ENCODE measurements at regions of chr22 and their contacts with region 1.

Region 1: GRCh38 chr22:22207845-22208564 is 36.6 kb upstream of the VPREB1 start:
- DNase-seq: peak; percentile 90
- ATAC-seq: peak; percentile 87
- H3K4me3 Mint-ChIP-seq: peak overlapping the region; percentile 51
- H3K27ac Mint-ChIP-seq: peak overlapping the region; percentile 85
- H3K4me1 Mint-ChIP-seq: peaks cover 42% of the 10 kb centered on the region
- H3K27me3 Mint-ChIP-seq: peaks cover 8% of the 10 kb centered on the region

Region 2: DNA sequence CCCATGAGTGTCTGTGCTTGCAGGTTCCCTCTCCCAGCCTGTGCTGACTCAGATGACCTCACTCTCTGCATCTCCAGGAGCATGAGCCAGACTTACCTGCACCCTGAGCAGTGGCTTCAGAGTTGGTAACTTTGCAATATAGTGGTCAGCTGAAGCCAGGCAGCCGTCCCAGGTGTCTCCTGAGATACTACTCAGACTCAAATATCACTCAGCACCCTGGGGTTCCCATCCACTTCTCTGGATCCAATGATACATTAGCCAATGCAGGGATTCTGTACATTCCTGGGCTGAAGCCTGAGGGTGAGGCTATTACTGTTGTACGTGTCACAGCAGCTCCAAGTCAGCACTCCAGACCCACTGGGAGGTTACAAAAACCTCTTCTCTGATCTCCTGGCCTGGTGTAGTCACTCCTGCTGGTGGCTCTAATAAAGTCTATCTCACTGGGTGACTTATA is 137.6 kb before region 1 on chr22:
- CTCF ChIA-PET with region 1: no interaction called
- POLR2A ChIA-PET with region 1: no interaction called
- DNase-seq: no peak
- ATAC-seq: no peak
- H3K4me3 Mint-ChIP-seq: no peak overlapping the region
- H3K27ac Mint-ChIP-seq: no peak overlapping the region
- H3K4me1 Mint-ChIP-seq: no peaks in the 10 kb centered on the region
- H3K27me3 Mint-ChIP-seq: peaks cover 19% of the 10 kb centered on the region

Region 3: GRCh38 chr22:22195265-22196017 is 12.6 kb before region 1 on chr22:
- CTCF ChIA-PET with region 1: interaction called, 19 read pairs
- POLR2A ChIA-PET with region 1: no interaction called
- DNase-seq: peak; percentile 90
- ATAC-seq: peak; percentile 98
- H3K4me3 Mint-ChIP-seq: no peak overlapping the region
- H3K27ac Mint-ChIP-seq: no peak overlapping the region
- H3K4me1 Mint-ChIP-seq: peaks cover 2% of the 10 kb centered on the region
- H3K27me3 Mint-ChIP-seq: peaks cover 28% of the 10 kb centered on the region

Region 4: GRCh38 chr22:22235558-22235957 is 27.6 kb after region 1 on chr22:
- CTCF ChIA-PET with region 1: interaction called, 133 read pairs
- POLR2A ChIA-PET with region 1: interaction called, 4 read pairs
- DNase-seq: peak; percentile 63
- ATAC-seq: peak; percentile 44
- H3K4me3 Mint-ChIP-seq: no peak overlapping the region
- H3K27ac Mint-ChIP-seq: no peak overlapping the region
- H3K4me1 Mint-ChIP-seq: peaks cover 15% of the 10 kb centered on the region
- H3K27me3 Mint-ChIP-seq: peaks cover 6% of the 10 kb centered on the region

Region 5: GRCh38 chr22:22243033-22243680 is 35.2 kb after region 1 on chr22:
- CTCF ChIA-PET with region 1: interaction called, 133 read pairs
- POLR2A ChIA-PET with region 1: interaction called, 3 read pairs
- DNase-seq: no peak
- ATAC-seq: no peak
- H3K4me3 Mint-ChIP-seq: no peak overlapping the region
- H3K27ac Mint-ChIP-seq: no peak overlapping the region
- H3K4me1 Mint-ChIP-seq: peaks cover 18% of the 10 kb centered on the region
- H3K27me3 Mint-ChIP-seq: peaks cover 12% of the 10 kb centered on the region

Region 6: DNA sequence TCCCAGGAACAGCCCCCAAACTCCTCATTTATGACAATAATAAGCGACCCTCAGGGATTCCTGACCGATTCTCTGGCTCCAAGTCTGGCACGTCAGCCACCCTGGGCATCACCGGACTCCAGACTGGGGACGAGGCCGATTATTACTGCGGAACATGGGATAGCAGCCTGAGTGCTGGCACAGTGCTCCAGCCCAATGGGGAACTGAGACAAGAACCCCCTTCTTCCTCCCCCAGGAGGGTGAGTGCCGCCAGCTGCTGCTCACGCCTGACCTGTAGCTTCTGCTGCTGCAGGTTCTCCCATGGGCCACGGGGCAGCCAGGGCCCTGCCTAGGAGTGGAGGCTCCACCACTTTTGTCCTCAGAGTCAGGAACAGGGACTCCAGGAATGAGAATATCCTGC is 114.8 kb after region 1 on chr22:
- CTCF ChIA-PET with region 1: interaction called, 19 read pairs
- POLR2A ChIA-PET with region 1: no interaction called
- DNase-seq: no peak
- ATAC-seq: no peak
- H3K4me3 Mint-ChIP-seq: no peak overlapping the region
- H3K27ac Mint-ChIP-seq: no peak overlapping the region
- H3K4me1 Mint-ChIP-seq: no peaks in the 10 kb centered on the region
- H3K27me3 Mint-ChIP-seq: peaks cover 3% of the 10 kb centered on the region

Region 7: GRCh38 chr22:22342697-22343580 is 134.9 kb after region 1 on chr22:
- CTCF ChIA-PET with region 1: interaction called, 17 read pairs
- POLR2A ChIA-PET with region 1: no interaction called
- DNase-seq: peak; percentile 77
- ATAC-seq: peak; percentile 79
- H3K4me3 Mint-ChIP-seq: no peak overlapping the region
- H3K27ac Mint-ChIP-seq: no peak overlapping the region
- H3K4me1 Mint-ChIP-seq: peaks cover 19% of the 10 kb centered on the region
- H3K27me3 Mint-ChIP-seq: peaks cover 26% of the 10 kb centered on the region

Measured in activated CD8-positive, alpha-beta T cell treated with anti-CD3 and anti-CD28 coated beads, Interleukin-2, amount 10 ng/mL, durations not matched to agents 7 days and 5 days (primary cell).